ENCODE measurements at regions of chr14 and their contacts with region 1.

Region 1: DNA sequence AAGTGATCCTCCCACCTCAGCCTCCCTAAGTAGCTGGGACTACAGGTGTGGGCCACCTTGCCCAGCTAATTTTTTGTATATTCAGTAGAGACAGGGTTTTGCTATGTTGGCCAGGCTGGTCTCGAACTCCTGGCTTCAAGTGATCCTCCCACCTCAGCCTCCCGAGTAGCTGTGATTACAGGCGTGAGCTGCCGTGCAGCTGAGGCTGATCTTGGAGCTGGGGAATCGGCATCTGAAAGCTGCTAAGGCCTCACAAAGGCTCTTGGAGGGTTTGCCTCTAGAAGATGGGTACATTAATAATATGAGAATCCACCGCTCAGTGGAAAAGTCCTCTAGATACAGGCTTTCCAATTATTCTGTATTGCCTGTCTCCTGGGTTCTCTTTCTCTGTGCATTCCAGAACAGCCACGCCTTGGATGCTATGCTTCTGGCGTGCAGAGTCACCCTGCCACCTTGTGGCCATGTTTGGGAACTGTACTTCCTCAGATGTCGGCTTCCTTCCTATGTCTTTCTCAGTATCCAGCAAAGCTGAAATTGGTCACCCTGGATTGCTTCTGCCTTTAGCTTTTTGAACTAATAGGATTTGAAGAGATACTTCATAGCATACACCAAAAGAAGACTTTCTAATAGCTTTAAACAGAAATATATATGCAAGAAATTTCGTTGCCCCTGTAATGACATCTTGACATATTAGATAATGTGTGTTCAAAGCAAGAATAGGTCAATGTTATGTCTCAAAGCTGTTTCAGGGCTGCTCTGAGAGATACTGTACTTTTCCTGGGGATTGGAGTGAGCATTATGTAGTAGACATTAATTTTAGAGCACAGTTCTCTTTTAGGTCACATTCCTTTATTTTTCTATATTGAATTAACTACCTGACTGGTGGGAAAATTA is 75.4 kb downstream of the SNAPC1 start:
- DNase-seq: peak; percentile 49 to 76 (median 67)
- ATAC-seq: peak; percentile 98
- H3K4me3 ChIP-seq: no peak overlapping the region
- H3K4me3 Mint-ChIP-seq: no peak overlapping the region
- H3K27ac ChIP-seq: no peak overlapping the region
- H3K27ac Mint-ChIP-seq: no peak overlapping the region
- H3K4me1 ChIP-seq: no peaks in the 10 kb centered on the region
- H3K4me1 Mint-ChIP-seq: peaks cover 0 to 9% (median 0%) of the 10 kb centered on the region in 7 donors
- H3K27me3 ChIP-seq: no peaks in the 10 kb centered on the region
- H3K27me3 Mint-ChIP-seq: peaks cover 0 to 31% (median 0%) of the 10 kb centered on the region in 5 donors

Region 2: DNA sequence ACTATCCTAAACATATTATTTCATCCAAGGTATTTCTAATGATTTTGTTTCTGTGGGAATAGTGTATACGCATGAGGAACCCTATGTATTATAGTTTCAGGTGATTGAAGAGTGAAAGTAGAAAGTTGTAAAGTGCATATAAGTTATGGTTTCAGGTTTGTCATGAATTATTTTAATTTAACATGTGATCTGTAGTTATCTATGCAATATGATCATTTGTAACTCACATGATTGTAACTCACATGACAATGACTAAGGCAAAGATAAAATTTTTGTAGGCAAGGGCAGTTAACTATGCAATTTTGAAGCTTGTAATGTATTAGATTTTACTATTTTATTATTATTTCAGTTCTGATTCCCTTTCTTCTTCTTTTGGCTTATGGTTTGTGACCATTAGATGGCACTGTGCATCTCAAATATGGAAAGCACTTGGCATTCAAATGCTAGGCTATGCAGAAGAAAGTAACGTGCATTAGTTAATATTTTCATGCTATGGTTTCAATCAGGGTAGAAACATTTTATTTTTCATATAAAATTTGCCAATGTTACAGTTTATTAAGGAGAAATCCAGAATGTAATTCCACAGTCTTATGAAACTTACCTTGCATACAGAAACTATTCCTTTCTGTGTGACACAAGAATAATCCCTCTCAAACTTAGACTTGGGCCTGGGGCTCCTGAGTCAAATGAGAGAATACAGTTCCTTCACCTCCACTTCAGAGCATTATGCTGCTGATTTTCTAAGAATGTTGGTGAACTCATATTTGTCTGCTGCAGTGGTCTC is 540.7 kb before region 1 on chr14:
- CTCF ChIA-PET with region 1: interaction called, 8 read pairs
- POLR2A ChIA-PET with region 1: no interaction called
- intact Hi-C with region 1: loop called (anchors 1 kb)
- DNase-seq: peak in 7 of 9 donors; percentile 38 to 68 (median 52)
- ATAC-seq: peak; percentile 85
- H3K4me3 ChIP-seq: no peak overlapping the region
- H3K4me3 Mint-ChIP-seq: peak overlapping the region in 2 of 10 donors; percentile 20 to 39
- H3K27ac ChIP-seq: no peak overlapping the region
- H3K27ac Mint-ChIP-seq: peak overlapping the region in 7 of 9 donors; percentile 26 to 88 (median 66)
- H3K4me1 ChIP-seq: peaks cover 15 to 40% of the 10 kb centered on the region in 2 donors
- H3K4me1 Mint-ChIP-seq: peaks cover 18 to 59% (median 56%) of the 10 kb centered on the region in 7 donors
- H3K27me3 ChIP-seq: no peaks in the 10 kb centered on the region
- H3K27me3 Mint-ChIP-seq: no peaks in the 10 kb centered on the region

Region 3: DNA sequence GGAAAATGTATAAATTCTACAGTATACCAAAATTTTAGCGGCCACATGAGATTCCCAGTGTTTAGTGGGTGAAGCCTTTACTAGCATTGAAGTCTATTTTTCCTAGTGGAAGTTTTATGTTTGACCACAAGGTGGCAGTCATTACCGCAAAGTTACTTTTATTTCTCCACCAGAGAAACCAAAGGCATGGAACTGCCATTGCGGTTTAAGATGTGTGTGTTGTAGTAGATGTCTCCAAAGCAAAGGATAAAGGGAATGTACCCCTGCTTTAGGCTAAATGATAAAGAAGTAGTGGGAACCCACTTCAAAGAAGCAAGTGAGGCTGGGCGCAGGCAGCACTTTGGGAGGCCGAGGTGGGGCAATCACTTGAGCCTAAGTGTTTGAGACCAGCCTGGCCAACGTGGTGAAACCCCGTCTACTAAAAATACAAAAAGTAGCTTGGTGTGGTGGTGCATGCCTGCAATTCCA is 375.7 kb before region 1 on chr14:
- CTCF ChIA-PET with region 1: interaction called, 24 read pairs
- POLR2A ChIA-PET with region 1: no interaction called
- intact Hi-C with region 1: loop called (anchors 1 kb)
- DNase-seq: peak in 7 of 9 donors; percentile 59 to 78 (median 71)
- ATAC-seq: peak; percentile 76
- H3K4me3 ChIP-seq: no peak overlapping the region
- H3K4me3 Mint-ChIP-seq: peak overlapping the region; percentile 4 to 69 (median 41)
- H3K27ac ChIP-seq: peak overlapping the region; percentile 56
- H3K27ac Mint-ChIP-seq: peak overlapping the region in 8 of 9 donors; percentile 85 to 97 (median 90)
- H3K4me1 ChIP-seq: peaks cover 12 to 21% of the 10 kb centered on the region in 2 donors
- H3K4me1 Mint-ChIP-seq: peaks cover 33 to 87% (median 82%) of the 10 kb centered on the region in 7 donors
- H3K27me3 ChIP-seq: no peaks in the 10 kb centered on the region
- H3K27me3 Mint-ChIP-seq: no peaks in the 10 kb centered on the region

Region 4: GRCh38 chr14:61730756-61731373 is 106.7 kb before region 1 on chr14:
- CTCF ChIA-PET with region 1: interaction called, 10 read pairs
- POLR2A ChIA-PET with region 1: no interaction called
- intact Hi-C with region 1: loop called (anchors 1 to 5 kb)
- DNase-seq: peak in 6 of 9 donors; percentile 25 to 51 (median 46)
- ATAC-seq: peak; percentile 39
- H3K4me3 ChIP-seq: no peak overlapping the region
- H3K4me3 Mint-ChIP-seq: peak overlapping the region in 1 of 10 donors; percentile 9
- H3K27ac ChIP-seq: no peak overlapping the region
- H3K27ac Mint-ChIP-seq: peak overlapping the region; percentile 9 to 76 (median 38)
- H3K4me1 ChIP-seq: peaks cover 0 to 4% of the 10 kb centered on the region in 2 donors
- H3K4me1 Mint-ChIP-seq: peaks cover 13 to 72% (median 41%) of the 10 kb centered on the region in 7 donors
- H3K27me3 ChIP-seq: no peaks in the 10 kb centered on the region
- H3K27me3 Mint-ChIP-seq: no peaks in the 10 kb centered on the region

Region 5: GRCh38 chr14:61761959-61762786 is 75.4 kb before region 1 on chr14 and contains the start of gene SNAPC1:
- CTCF ChIA-PET with region 1: interaction called, 12 read pairs
- POLR2A ChIA-PET with region 1: interaction called, 3 read pairs
- intact Hi-C with region 1: no loop called
- DNase-seq: peak; percentile 92 to 98 (median 96)
- ATAC-seq: peak; percentile 97
- H3K4me3 ChIP-seq: peak within 1 kb of the TSS; percentile 94
- H3K4me3 Mint-ChIP-seq: peak within 1 kb of the TSS; percentile 96 to 100 (median 98)
- H3K27ac ChIP-seq: peak within 1 kb of the TSS; percentile 95
- H3K27ac Mint-ChIP-seq: peak within 1 kb of the TSS; percentile 98 to 100 (median 99)
- H3K4me1 ChIP-seq: peaks cover 13 to 17% of the 10 kb centered on the region in 2 donors
- H3K4me1 Mint-ChIP-seq: peaks cover 27 to 62% (median 53%) of the 10 kb centered on the region in 7 donors
- H3K27me3 ChIP-seq: no peaks in the 10 kb centered on the region
- H3K27me3 Mint-ChIP-seq: peaks cover 0 to 4% (median 0%) of the 10 kb centered on the region in 5 donors
- total RNA-seq, gene SNAPC1: 3.5 to 8.7 (median 5.1) TPM